ENCODE measurements at regions of chr2 and their contacts with region 1.

Region 1: GRCh38 chr2:217993817-217994463 is 8.9 kb downstream of the TNS1 start:
- DNase-seq: peak; percentile 25 to 93
- H3K4me3 ChIP-seq: no peak overlapping the region
- H3K27ac ChIP-seq: no peak overlapping the region
- H3K4me1 ChIP-seq: peaks cover 0 to 13% (median 6%) of the 10 kb centered on the region in 4 experiments; a peak in 4 of 7 replicates
- H3K27me3 ChIP-seq: no peaks in the 10 kb centered on the region; a peak in 3 of 7 replicates
- CTCF ChIP-seq: peak in 2 of 3 experiments; percentile 84 to 91; a peak in 3 of 4 replicates
- EP300 ChIP-seq: no peak
- POLR2A ChIP-seq: no peak
- RAD21 ChIP-seq: peak; percentile 57 to 74

Region 2: GRCh38 chr2:217880287-217880889 is 113.6 kb before region 1 on chr2:
- CTCF ChIA-PET with region 1: interaction called, 41 read pairs
- POLR2A ChIA-PET with region 1: no interaction called
- DNase-seq: no peak
- H3K4me3 ChIP-seq: no peak overlapping the region
- H3K27ac ChIP-seq: no peak overlapping the region
- H3K4me1 ChIP-seq: peaks cover 0 to 9% (median under 1%) of the 10 kb centered on the region in 4 experiments; a peak in 4 of 7 replicates
- H3K27me3 ChIP-seq: no peaks in the 10 kb centered on the region
- CTCF ChIP-seq: peak in 1 of 3 experiments; percentile 18; a peak in 1 of 4 replicates
- EP300 ChIP-seq: no peak
- POLR2A ChIP-seq: no peak
- RAD21 ChIP-seq: no peak

Region 3: GRCh38 chr2:217909156-217909820 is 84.7 kb before region 1 on chr2:
- CTCF ChIA-PET with region 1: interaction called, 19 read pairs
- POLR2A ChIA-PET with region 1: no interaction called
- DNase-seq: no peak
- H3K4me3 ChIP-seq: no peak overlapping the region
- H3K27ac ChIP-seq: no peak overlapping the region
- H3K4me1 ChIP-seq: peaks cover 3 to 15% (median 9%) of the 10 kb centered on the region in 4 experiments
- H3K27me3 ChIP-seq: peaks cover 0 to 4% (median 2%) of the 10 kb centered on the region in 4 experiments; a peak in 4 of 7 replicates
- CTCF ChIP-seq: peak in 2 of 3 experiments; percentile 10 to 28; a peak in 3 of 4 replicates
- EP300 ChIP-seq: no peak
- POLR2A ChIP-seq: no peak
- RAD21 ChIP-seq: peak in 1 of 2 experiments; percentile 14; a peak in 1 of 4 replicates

Region 4: GRCh38 chr2:217964275-217965161 is 29.4 kb before region 1 on chr2:
- CTCF ChIA-PET with region 1: interaction called, 15 read pairs
- POLR2A ChIA-PET with region 1: no interaction called
- DNase-seq: no peak
- H3K4me3 ChIP-seq: no peak overlapping the region
- H3K27ac ChIP-seq: no peak overlapping the region; the same call in 1 of the 2 replicates
- H3K4me1 ChIP-seq: peaks cover 0 to 13% (median 8%) of the 10 kb centered on the region in 4 experiments; a peak in 6 of 7 replicates
- H3K27me3 ChIP-seq: no peaks in the 10 kb centered on the region
- CTCF ChIP-seq: no peak
- EP300 ChIP-seq: no peak
- POLR2A ChIP-seq: no peak
- RAD21 ChIP-seq: no peak; a peak in 1 of 4 replicates

Region 5: GRCh38 chr2:218010140-218010983 is 16.4 kb after region 1 on chr2:
- CTCF ChIA-PET with region 1: interaction called, 30 read pairs
- POLR2A ChIA-PET with region 1: interaction called, 11 read pairs
- DNase-seq: peak in 1 of 2 experiments; percentile 76
- H3K4me3 ChIP-seq: peak overlapping the region; percentile 43 to 73 (median 56)
- H3K27ac ChIP-seq: no peak overlapping the region
- H3K4me1 ChIP-seq: peaks cover 0 to 12% (median 8%) of the 10 kb centered on the region in 4 experiments; a peak in 5 of 7 replicates
- H3K27me3 ChIP-seq: peaks cover 12 to 40% (median 32%) of the 10 kb centered on the region in 4 experiments
- CTCF ChIP-seq: peak in 2 of 3 experiments; percentile 18 to 29; a peak in 3 of 4 replicates
- EP300 ChIP-seq: no peak
- POLR2A ChIP-seq: no peak
- RAD21 ChIP-seq: peak in 1 of 2 experiments; percentile 42; a peak in 1 of 4 replicates

Region 6: GRCh38 chr2:218039171-218039570 is 45.2 kb after region 1 on chr2:
- CTCF ChIA-PET with region 1: interaction called, 29 read pairs
- POLR2A ChIA-PET with region 1: no interaction called
- DNase-seq: no peak
- H3K4me3 ChIP-seq: no peak overlapping the region
- H3K27ac ChIP-seq: no peak overlapping the region
- H3K4me1 ChIP-seq: peaks cover 0 to 1% (median 0%) of the 10 kb centered on the region in 4 experiments; a peak in 1 of 7 replicates
- H3K27me3 ChIP-seq: peaks cover 0 to 6% (median 3%) of the 10 kb centered on the region in 4 experiments; a peak in 6 of 7 replicates
- CTCF ChIP-seq: no peak
- EP300 ChIP-seq: no peak
- POLR2A ChIP-seq: no peak
- RAD21 ChIP-seq: no peak